ENCODE measurements at regions of chr1 and their contacts with region 1.

Region 1: DNA sequence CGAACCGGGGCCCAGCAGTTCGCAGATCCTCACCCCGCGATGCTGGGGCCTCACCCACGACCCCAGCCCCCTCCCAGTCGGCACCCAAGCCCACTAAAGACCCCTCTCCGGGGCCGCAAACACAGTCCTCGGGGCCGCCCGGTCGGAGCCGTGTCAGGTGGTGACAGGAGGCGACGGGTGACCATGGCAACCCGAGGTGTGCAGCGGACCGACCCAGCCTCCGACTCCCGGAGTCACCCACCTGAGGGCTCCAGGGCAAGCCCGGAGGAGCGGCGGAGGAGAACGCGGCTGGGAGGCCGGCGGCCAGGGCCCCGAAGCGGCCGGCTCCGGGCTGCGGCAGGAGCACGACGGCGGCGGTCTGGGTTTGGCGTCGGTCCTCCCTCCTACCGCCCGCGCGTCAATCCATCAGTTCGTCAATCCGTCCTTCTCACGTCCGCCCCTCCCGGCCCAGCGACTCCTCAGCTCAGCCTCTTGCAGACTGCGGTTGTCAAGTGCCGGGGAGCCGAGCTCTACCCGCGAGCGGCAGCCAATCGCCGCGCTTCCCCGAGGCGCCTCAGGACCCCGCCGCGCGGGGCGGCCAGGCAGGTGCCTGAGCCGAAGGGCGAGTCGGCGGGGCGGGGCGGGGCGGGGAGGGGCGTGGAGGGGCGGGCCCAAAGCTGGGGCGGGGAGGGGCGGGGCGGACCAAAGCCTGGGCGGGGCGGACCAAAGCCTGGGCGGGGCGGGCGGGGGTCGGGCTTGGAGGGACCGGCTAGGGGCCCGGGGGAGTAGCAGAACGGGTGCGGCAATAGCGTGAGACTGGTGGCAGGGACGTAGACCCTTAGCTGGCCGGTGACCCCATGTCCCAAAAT is at the start of gene WDR47:
- DNase-seq: peak; percentile 99
- ATAC-seq: peak; percentile 98
- total RNA-seq, gene WDR47: 14.6 TPM

Region 2: GRCh38 chr1:109090196-109091077 is 48.6 kb after region 1 on chr1 and contains the start of gene TMEM167B:
- intact Hi-C with region 1: loop called (anchors 5 kb)
- DNase-seq: peak; percentile 97
- ATAC-seq: peak; percentile 96
- total RNA-seq, gene TMEM167B: 31.5 TPM

Measured in Right ventricle myocardium inferior (tissue), 1 donor.